ENCODE measurements at regions of chr15 and their contacts with region 1.

Region 1: GRCh38 chr15:40857601-40858341 is 13.9 kb downstream of the SPINT1 start:
- DNase-seq: peak; percentile 59 to 80 (median 73)
- H3K4me3 ChIP-seq: no peak overlapping the region
- H3K27ac ChIP-seq: no peak overlapping the region
- H3K4me1 ChIP-seq: peaks cover 0 to 10% (median 4%) of the 10 kb centered on the region in 4 experiments
- H3K27me3 ChIP-seq: no peaks in the 10 kb centered on the region

Region 2: DNA sequence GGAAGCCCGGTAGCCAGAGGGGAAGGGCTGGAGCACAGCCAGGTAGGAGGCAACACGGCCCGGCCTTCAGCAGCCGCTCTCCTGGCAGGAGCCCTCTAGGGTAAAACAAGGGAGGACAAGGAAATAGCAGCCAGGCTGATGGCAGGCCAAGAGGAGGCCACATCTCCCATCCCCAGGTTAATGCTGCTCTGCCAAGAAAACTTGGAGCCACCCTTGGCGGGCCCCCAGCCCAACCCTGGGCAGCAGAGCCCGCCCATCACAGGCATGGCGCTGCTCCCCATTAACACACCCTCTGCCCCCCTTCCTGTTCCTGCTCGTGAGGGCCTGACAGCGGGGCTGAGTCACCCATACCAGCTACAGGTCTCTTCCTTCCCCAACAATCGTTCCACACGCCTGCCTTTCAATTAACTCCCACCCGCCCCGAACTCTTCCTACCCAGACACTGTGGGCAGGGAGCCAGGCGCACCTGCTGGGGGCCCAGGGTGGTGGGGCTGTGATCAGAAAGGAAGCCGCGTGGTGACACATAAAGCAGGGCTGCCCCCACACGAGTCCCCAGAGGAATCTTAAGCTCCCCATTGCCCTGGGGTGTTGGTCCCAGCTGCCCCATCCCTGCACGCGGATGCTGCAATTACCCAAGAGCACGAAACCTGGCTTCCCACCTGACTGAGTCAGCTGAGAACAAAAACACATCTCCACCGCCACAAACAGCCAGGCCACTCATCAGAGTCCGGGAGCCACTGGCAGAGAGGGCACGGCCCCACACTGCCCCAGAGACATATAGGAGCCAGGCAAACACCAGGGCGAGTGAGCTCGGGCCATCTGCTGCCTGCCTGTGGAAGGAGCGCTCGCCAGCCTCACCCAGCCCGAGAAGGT is 88.3 kb before region 1 on chr15 and contains the start of gene C15orf62:
- CTCF ChIA-PET with region 1: no interaction called
- POLR2A ChIA-PET with region 1: no interaction called
- DNase-seq: peak; percentile 86 to 97 (median 94)
- H3K4me3 ChIP-seq: peak within 1 kb of the TSS in 5 of 7 experiments; percentile 21 to 63 (median 53)
- H3K27ac ChIP-seq: peak within 1 kb of the TSS; percentile 40 to 65
- H3K4me1 ChIP-seq: peaks cover 4 to 64% (median 52%) of the 10 kb centered on the region in 4 experiments
- H3K27me3 ChIP-seq: no peaks in the 10 kb centered on the region

Region 3: DNA sequence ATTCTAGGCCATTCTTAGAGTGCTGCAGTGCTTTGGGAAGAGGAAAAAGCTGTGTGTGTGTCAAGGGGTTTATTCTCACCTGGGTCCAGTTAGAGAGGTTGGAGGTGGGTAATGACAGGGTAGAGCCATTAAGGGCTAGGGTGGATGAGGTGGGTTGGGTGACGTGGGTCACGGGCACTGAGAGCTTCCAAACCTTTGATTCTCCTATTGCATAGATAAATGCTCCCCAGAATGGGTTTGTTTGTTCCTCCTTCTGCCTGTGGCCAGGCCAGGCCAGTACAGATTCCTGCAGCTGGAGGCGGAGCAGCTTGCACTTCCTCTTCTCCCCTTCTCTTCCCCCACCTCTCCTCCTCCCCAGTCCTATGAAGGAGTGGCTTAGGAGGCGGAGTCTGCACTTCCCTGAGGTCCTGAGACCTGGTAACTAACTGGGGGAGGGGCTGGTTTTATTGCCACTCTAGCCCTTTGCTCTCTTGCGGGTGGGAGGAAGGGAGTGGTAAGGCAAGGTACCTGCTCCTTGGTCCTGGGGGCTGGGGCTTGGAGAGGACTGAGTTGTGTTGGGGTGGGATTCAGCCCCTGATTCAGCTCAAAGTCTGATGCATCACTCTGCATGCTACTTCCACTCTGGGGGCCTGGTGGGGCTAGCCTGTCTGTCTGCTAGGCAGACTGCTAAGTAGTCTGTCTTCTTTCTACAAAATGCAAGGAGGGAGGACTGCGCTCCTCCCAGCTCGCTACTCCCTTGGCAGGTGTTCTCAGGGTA is 10.4 kb before region 1 on chr15:
- CTCF ChIA-PET with region 1: interaction called, 78 read pairs
- POLR2A ChIA-PET with region 1: no interaction called
- DNase-seq: peak; percentile 88 to 95 (median 95)
- H3K4me3 ChIP-seq: peak overlapping the region in 5 of 7 experiments; percentile 8 to 57 (median 44)
- H3K27ac ChIP-seq: peak overlapping the region in 1 of 2 experiments; percentile 50
- H3K4me1 ChIP-seq: peaks cover 7 to 48% (median 42%) of the 10 kb centered on the region in 4 experiments
- H3K27me3 ChIP-seq: peaks cover 0 to 5% (median 0%) of the 10 kb centered on the region in 5 experiments

Region 4: GRCh38 chr15:41022487-41023090 is 164.8 kb after region 1 on chr15:
- CTCF ChIA-PET with region 1: interaction called, 20 read pairs
- POLR2A ChIA-PET with region 1: no interaction called
- DNase-seq: peak; percentile 59 to 81 (median 76)
- H3K4me3 ChIP-seq: no peak overlapping the region
- H3K27ac ChIP-seq: no peak overlapping the region
- H3K4me1 ChIP-seq: peaks cover 1 to 10% (median 3%) of the 10 kb centered on the region in 4 experiments
- H3K27me3 ChIP-seq: no peaks in the 10 kb centered on the region

Region 5: DNA sequence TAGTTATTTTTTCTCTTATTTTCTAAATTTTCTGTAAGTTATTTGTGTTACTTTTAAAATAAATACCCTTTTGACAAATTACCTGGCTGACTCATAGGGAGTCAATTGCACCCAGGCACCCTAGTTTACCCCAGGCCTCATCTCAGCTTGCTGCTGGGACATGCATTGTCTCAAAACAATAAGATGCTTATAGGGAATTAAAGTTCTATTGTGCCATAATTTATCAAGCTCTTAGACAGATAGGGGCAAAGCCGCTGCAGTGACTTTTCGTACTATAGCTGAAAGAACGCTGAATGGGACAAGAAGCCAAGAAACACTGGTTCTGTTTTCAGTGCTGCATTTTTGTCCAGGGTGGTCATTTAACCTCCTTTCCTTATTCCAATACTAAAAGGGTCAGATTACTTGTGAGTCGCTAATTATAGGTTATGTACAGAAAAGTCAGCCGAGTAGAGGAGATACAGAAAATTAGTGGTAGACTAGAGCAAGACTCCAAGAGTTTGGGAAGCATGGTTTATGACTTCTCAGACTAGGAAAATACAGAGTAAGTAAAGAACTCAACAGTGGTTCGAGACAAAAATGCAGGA is 322.5 kb after region 1 on chr15:
- CTCF ChIA-PET with region 1: interaction called, 18 read pairs
- POLR2A ChIA-PET with region 1: no interaction called
- DNase-seq: no peak
- H3K4me3 ChIP-seq: no peak overlapping the region
- H3K27ac ChIP-seq: no peak overlapping the region
- H3K4me1 ChIP-seq: peaks cover 0 to 4% (median 0%) of the 10 kb centered on the region in 4 experiments
- H3K27me3 ChIP-seq: no peaks in the 10 kb centered on the region